Right cardiac atrium (tissue), 5 donors: ENCODE measurements at regions of chr17 and their contacts with region 1.

Region 1: GRCh38 chr17:81394921-81395599 is at the start of gene BAHCC1:
- DNase-seq: peak; percentile 100
- ATAC-seq: peak; percentile 85 to 90
- H3K4me3 ChIP-seq: peak within 1 kb of the TSS; percentile 91
- H3K27ac ChIP-seq: peak within 1 kb of the TSS; percentile 96
- H3K4me1 ChIP-seq: peaks cover 3% of the 10 kb centered on the region
- H3K27me3 ChIP-seq: no peaks in the 10 kb centered on the region
- total RNA-seq, gene BAHCC1: 8.3 to 12.8 (median 9.4) TPM

Region 2: DNA sequence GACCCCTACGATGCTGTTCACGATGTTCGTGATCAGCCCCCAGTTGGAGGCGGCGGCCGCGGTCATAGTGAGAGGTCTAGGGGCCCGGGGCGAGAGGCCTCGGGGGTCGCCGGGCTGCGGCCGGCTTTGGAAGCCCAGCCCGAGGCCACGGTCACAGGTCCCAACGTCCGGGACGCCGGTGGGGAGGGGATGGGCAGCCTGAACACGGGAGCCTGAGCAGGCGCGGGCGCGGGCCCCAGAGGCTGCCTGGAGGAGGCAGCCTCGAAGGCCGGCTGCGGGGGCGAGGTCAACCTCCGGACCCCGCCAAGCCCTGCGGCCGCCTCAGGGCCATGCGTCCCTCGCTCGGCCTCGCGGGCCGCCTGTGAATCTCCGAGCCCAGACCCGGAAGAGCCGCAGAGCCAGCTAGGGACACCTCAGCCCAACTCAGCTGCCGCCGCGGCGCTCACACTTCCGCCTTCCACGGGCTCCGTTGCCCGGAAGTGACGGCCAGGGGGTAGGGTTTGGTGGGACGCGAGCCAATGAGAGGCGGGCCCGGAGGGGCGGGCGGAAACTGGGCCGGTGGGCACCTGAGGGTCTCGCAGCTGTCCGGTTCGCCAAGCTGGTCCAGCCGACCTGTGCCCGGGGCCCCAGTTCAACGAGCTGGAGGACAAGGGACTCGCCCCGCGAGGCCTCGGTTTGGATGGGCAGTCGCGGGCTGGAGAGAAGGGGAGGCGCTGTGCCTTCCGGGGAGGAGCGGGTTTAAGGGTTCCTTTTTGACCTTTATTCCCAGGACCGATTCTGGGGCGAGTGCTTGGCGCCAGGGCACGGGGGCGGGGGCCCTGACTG is 100.0 kb before region 1 on chr17 and contains the start of gene SLC38A10:
- intact Hi-C with region 1: loop called in 2 of 4 experiments (anchors 5 kb)
- DNase-seq: peak; percentile 93 to 98 (median 98)
- ATAC-seq: peak; percentile 93 to 95
- H3K4me3 ChIP-seq: peak within 1 kb of the TSS; percentile 66
- H3K27ac ChIP-seq: peak within 1 kb of the TSS; percentile 83
- H3K4me1 ChIP-seq: peaks cover 7% of the 10 kb centered on the region
- H3K27me3 ChIP-seq: no peaks in the 10 kb centered on the region
- total RNA-seq, gene SLC38A10: 50.8 to 63.9 (median 53.5) TPM

Region 3: GRCh38 chr17:81302861-81303333 is 92.2 kb before region 1 on chr17:
- intact Hi-C with region 1: loop called in 1 of 4 experiments (anchors 5 kb)
- DNase-seq: peak in 1 of 3 donors; percentile 70
- ATAC-seq: peak; percentile 8 to 36
- H3K4me3 ChIP-seq: no peak overlapping the region
- H3K27ac ChIP-seq: no peak overlapping the region
- H3K4me1 ChIP-seq: no peaks in the 10 kb centered on the region
- H3K27me3 ChIP-seq: no peaks in the 10 kb centered on the region

Region 4: GRCh38 chr17:81428948-81429774 is 34.1 kb after region 1 on chr17:
- intact Hi-C with region 1: no loop called
- DNase-seq: peak; percentile 81 to 95 (median 95)
- ATAC-seq: peak; percentile 77 to 78
- H3K4me3 ChIP-seq: no peak overlapping the region
- H3K27ac ChIP-seq: no peak overlapping the region
- H3K4me1 ChIP-seq: peaks cover 4% of the 10 kb centered on the region
- H3K27me3 ChIP-seq: no peaks in the 10 kb centered on the region